Caco-2 (cell line): ENCODE measurements at regions of chrX and their contacts with region 1.

Region 1: DNA sequence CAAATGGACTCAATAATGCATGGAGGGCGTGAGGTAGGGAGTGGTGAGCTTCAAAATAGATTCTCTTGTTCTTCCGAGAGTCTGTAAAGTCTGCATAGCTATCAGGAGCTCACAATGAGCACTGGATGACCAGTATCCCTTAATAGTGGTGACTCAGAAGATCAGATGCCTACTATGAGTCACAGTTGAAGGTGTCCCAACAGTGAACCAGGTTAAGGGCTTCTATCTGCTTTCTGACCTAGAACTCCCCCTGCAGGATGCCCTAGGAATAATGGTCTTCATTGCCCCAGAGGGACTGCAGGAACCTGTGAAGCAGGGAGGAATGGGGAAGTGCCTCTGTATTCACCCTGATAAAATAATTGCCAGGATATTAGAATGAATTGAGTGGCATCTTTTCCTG is 22.1 kb downstream of the DGKK start:
- DNase-seq: peak; percentile 37 to 50
- H3K4me3 ChIP-seq: no peak overlapping the region
- H3K4me3 Mint-ChIP-seq: no peak overlapping the region
- H3K27ac Mint-ChIP-seq: no peak overlapping the region
- H3K4me1 ChIP-seq: no peaks in the 10 kb centered on the region
- H3K4me1 Mint-ChIP-seq: no peaks in the 10 kb centered on the region
- H3K27me3 ChIP-seq: no peaks in the 10 kb centered on the region
- H3K27me3 Mint-ChIP-seq: no peaks in the 10 kb centered on the region
- CTCF ChIP-seq: peak; percentile 21 to 28

Region 2: GRCh38 chrX:50211502-50211901 is 237.1 kb before region 1 on chrX:
- CTCF ChIA-PET with region 1: no interaction called
- POLR2A ChIA-PET with region 1: no interaction called
- intact Hi-C with region 1: loop called (anchors 1 kb)
- DNase-seq: peak in 1 of 2 experiments; percentile 3
- H3K4me3 ChIP-seq: no peak overlapping the region
- H3K4me3 Mint-ChIP-seq: no peak overlapping the region
- H3K27ac Mint-ChIP-seq: no peak overlapping the region
- H3K4me1 ChIP-seq: no peaks in the 10 kb centered on the region
- H3K4me1 Mint-ChIP-seq: no peaks in the 10 kb centered on the region
- H3K27me3 ChIP-seq: no peaks in the 10 kb centered on the region
- H3K27me3 Mint-ChIP-seq: no peaks in the 10 kb centered on the region
- CTCF ChIP-seq: peak in 1 of 2 experiments; percentile 26